A549 (cell line): ENCODE measurements at regions of chr17 and their contacts with region 1.

Region 1: GRCh38 chr17:45197555-45198334 is 23.9 kb upstream of the FMNL1 start:
- DNase-seq: peak; percentile 80 to 95
- ATAC-seq: peak; percentile 96 to 98
- H3K4me3 ChIP-seq: no peak overlapping the region
- H3K27ac ChIP-seq: peak overlapping the region; percentile 93 to 94
- H3K4me1 ChIP-seq: peaks cover 51% of the 10 kb centered on the region
- CTCF ChIP-seq: peak; percentile 100
- EP300 ChIP-seq: no peak
- POLR2A ChIP-seq: no peak
- RAD21 ChIP-seq: peak; percentile 100

Region 2: DNA sequence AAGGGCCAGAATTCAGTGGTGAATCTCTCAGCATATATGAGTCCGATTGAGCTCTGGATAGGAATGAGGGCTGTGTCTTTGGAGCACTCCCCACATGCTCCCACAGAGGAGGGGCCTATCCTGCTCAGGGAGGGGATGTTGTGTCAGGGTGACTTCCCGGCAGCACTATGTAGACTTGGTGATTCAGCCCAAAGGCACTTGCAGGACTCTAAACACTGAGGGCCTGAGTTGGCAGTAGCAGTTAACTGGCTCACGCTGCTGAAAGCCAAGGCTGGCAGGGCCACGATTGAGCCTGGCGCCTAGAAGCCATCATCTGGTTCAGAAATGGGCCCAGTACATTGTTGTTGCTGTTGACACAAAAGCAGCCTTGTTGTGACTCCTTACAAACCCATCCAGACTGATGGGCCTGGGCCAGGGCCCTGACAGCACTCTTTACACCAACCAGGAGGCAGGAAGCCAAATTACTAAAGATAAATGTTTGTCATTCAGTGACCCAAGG is 104.8 kb before region 1 on chr17:
- CTCF ChIA-PET with region 1: interaction called, 12 read pairs
- POLR2A ChIA-PET with region 1: no interaction called
- DNase-seq: peak; percentile 94 to 99
- ATAC-seq: peak; percentile 95 to 97
- H3K4me3 ChIP-seq: no peak overlapping the region
- H3K27ac ChIP-seq: peak overlapping the region; percentile 77 to 91
- H3K4me1 ChIP-seq: peaks cover 45% of the 10 kb centered on the region
- CTCF ChIP-seq: no peak
- EP300 ChIP-seq: no peak; a peak in 1 of 5 replicates
- POLR2A ChIP-seq: no peak
- RAD21 ChIP-seq: no peak

Region 3: DNA sequence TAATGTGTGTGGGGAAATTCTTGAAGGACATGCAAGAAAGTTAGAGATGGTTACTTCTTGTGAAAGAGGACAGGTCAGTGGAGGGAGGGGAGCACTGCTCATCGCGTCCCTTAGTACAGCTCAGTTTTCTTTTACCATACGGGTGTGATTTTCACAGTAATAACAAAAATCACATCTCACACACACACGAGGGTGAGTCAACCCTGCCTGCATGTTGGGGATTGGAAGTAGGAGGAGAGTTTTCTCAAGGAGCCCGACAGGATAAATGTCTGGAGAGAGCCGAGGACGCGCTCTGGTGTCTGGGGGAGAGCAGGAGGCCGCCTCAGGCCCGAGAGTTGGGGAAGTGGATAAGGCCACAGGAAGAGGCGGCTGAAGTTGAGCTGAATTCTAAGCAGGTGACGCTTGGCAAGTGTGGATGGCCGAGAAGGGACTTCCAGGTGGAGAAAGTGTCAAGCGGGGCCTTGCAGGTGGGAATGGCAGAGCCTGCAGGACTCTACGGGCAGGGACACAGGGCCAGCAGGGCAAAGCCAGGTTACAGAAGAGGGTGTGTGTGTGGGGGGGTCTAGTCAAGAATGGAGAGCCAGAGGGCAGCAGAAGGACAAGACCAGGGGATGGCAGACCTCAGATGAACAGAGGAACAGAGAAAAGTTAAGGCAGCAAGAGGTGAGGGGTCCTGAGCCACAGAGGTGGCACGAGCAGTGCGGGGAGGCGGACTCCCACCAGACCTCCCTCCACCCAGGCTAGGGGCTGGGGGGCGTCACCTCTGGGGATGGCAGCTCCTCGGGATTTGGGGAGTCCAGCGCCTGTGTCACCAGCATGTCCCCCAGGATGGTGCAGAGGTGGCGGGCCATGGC is 81.6 kb before region 1 on chr17:
- CTCF ChIA-PET with region 1: interaction called, 20 read pairs
- POLR2A ChIA-PET with region 1: no interaction called
- DNase-seq: no peak
- ATAC-seq: no peak
- H3K4me3 ChIP-seq: no peak overlapping the region
- H3K27ac ChIP-seq: peak overlapping the region in 1 of 2 experiments; percentile 37; a peak in 2 of 6 replicates
- H3K4me1 ChIP-seq: 0 out of 3 replicates have a peak, but pooled peaks cover 3% of the 10 kb centered on the region
- CTCF ChIP-seq: no peak
- EP300 ChIP-seq: no peak
- POLR2A ChIP-seq: no peak
- RAD21 ChIP-seq: no peak

Region 4: DNA sequence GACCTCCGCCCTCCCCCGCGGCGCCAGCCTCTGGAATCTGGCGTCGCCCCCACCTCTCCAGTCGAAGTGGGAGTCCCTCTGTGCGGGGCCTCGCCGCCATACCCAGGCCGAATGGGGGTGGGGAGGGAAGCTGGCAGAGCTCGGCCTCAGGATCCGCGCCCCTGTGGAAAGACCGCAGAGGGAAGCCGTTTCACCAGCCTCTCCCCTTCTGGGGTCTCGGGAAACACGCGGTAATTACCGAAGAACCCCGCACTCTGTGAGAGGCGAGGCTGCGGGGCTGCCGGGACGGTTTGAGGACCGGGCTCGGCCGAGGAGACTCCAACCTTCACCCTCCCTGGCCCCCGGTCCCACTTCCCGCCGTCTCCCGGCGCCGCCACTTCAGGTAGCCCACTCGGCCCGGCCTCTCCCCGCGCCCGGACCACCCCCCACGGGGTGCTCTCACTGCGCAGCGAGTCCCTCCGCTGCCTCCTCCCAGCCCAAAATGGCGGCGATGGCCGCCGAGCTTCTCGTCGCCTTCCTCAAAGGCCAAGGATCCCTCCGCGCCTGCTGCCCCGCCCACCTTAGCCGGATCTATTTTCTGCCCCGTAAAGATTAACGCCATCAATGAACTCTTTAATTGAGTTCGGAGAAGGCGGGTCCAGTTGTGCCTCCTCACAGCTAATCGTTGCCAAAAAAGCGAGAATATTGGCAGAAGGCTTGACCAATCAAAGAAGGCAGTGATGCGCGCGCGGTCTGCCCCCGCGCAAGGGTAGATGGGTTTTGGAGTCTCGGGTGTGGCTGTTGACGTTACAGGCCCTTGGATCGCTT is 36.5 kb before region 1 on chr17:
- CTCF ChIA-PET with region 1: interaction called, 2,147 read pairs
- POLR2A ChIA-PET with region 1: interaction called, 37 read pairs
- DNase-seq: peak; percentile 98 to 100
- ATAC-seq: peak; percentile 95 to 96
- H3K4me3 ChIP-seq: peak overlapping the region; percentile 81
- H3K27ac ChIP-seq: peak overlapping the region; percentile 98 to 99
- H3K4me1 ChIP-seq: peaks cover 39% of the 10 kb centered on the region
- CTCF ChIP-seq: no peak; the same call in 1 of the 3 replicates
- EP300 ChIP-seq: no peak
- POLR2A ChIP-seq: peak; percentile 48
- RAD21 ChIP-seq: no peak; a peak in 2 of 5 replicates

Region 5: GRCh38 chr17:45218895-45219661 is 21.3 kb after region 1 on chr17:
- CTCF ChIA-PET with region 1: interaction called, 221 read pairs
- POLR2A ChIA-PET with region 1: no interaction called
- DNase-seq: peak; percentile 85 to 87
- ATAC-seq: peak; percentile 61 to 82
- H3K4me3 ChIP-seq: no peak overlapping the region
- H3K27ac ChIP-seq: peak overlapping the region; percentile 97
- H3K4me1 ChIP-seq: peaks cover 37% of the 10 kb centered on the region
- CTCF ChIP-seq: peak; percentile 99
- EP300 ChIP-seq: no peak
- POLR2A ChIP-seq: no peak
- RAD21 ChIP-seq: peak; percentile 99 to 100

Region 6: GRCh38 chr17:45261577-45262515 is 64.1 kb after region 1 on chr17 and contains the start of gene SPATA32:
- CTCF ChIA-PET with region 1: interaction called, 16 read pairs
- POLR2A ChIA-PET with region 1: no interaction called
- DNase-seq: no peak
- ATAC-seq: no peak
- H3K4me3 ChIP-seq: no peak within 1 kb of the TSS
- H3K27ac ChIP-seq: peak within 1 kb of the TSS in 1 of 2 experiments; percentile 54; a peak in 3 of 6 replicates
- H3K4me1 ChIP-seq: peaks cover 46% of the 10 kb centered on the region
- CTCF ChIP-seq: no peak
- EP300 ChIP-seq: no peak
- POLR2A ChIP-seq: no peak
- RAD21 ChIP-seq: no peak
- polyA plus RNA-seq, gene SPATA32: 0.05 and 0.08 TPM in 2 replicates

Region 7: DNA sequence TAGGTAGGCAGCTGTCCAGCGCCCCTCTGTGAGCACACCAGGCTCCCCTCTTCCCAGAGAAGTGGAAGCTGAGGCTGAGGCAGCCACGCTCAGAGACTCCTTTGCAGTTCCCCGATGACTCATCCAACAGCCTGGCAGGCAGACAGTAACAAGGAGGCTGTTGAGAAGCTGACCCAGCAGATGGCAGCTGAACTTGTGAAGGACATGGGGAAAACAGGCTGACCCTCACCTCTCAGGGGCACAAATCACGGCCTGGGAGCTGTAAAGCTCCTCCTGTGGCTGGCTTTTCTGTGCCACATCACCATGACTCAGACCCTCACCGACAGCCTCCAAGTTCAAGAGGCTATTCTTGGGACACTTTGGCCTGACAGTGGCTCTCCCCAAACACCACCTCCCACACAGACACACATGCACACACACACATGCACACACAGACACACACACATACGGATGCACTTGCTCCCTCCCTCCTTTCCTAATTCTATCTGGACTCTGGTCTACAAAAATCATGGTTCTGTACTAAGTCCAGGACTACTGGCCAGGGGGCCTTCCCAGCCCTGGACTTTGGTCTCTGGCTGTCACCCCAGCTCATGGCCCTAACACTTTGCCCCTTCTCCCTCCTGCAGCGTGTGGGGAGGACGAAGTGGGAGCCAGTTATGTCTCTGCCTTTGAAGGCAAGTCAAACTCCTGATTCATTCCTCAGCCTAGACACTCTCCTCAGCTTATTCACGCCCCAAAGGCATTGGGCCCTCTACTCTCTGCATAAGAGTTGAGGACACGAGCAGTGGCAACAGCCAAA is 95.9 kb after region 1 on chr17:
- CTCF ChIA-PET with region 1: no interaction called
- POLR2A ChIA-PET with region 1: no interaction called
- DNase-seq: peak; percentile 93 to 97
- ATAC-seq: peak; percentile 84 to 86
- H3K4me3 ChIP-seq: peak overlapping the region; percentile 8; the same call in 1 of the 3 replicates
- H3K27ac ChIP-seq: peak overlapping the region; percentile 90 to 92
- H3K4me1 ChIP-seq: peaks cover 90% of the 10 kb centered on the region
- CTCF ChIP-seq: peak; percentile 34
- EP300 ChIP-seq: peak; percentile 55 to 57; a peak in 2 of 5 replicates
- POLR2A ChIP-seq: no peak
- RAD21 ChIP-seq: peak; percentile 57 to 60